Esophagus squamous epithelium (tissue), 5 donors: ENCODE measurements at regions of chr4 and their contacts with region 1.

Region 1: GRCh38 chr4:47933840-47934239 is 19.5 kb upstream of the NFXL1 start:
- DNase-seq: no peak
- H3K4me3 ChIP-seq: no peak overlapping the region
- H3K27ac ChIP-seq: no peak overlapping the region
- H3K4me1 ChIP-seq: no peaks in the 10 kb centered on the region
- H3K27me3 ChIP-seq: peaks cover 0 to 4% (median 0%) of the 10 kb centered on the region in 4 donors
- CTCF ChIP-seq: peak; percentile 29 to 54 (median 48)
- POLR2A ChIP-seq: no peak

Region 2: DNA sequence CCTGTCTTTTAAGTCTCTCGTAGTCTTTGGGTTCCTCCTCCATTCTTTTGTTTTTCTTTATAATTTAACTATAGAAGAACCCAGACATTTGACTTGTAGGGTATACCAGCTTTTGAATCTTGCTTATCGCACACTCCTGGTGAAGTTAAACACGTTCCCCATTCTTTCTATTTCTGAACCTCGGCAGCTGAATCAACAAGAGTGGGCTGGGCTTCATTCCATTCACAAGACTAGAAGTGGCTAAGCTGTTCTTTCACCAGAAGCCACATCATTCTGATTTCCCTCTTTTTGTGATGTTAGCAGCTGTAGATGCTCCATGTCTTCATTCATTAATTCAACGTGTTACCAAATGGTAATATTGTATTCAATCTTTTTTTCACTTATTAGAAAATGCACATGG is 263.9 kb before region 1 on chr4:
- intact Hi-C with region 1: loop called (anchors 10 kb)
- DNase-seq: no peak
- H3K4me3 ChIP-seq: no peak overlapping the region
- H3K27ac ChIP-seq: no peak overlapping the region
- H3K4me1 ChIP-seq: no peaks in the 10 kb centered on the region
- H3K27me3 ChIP-seq: peaks cover 0 to 5% (median 0%) of the 10 kb centered on the region in 4 donors
- CTCF ChIP-seq: no peak
- POLR2A ChIP-seq: no peak